PC-9 (cell line): ENCODE measurements at regions of chr6 and their contacts with region 1.

Region 1: GRCh38 chr6:71181565-71181964 is 107.0 kb upstream of the OGFRL1 start:
- DNase-seq: peak; percentile 69 to 77
- H3K4me3 ChIP-seq: no peak overlapping the region
- H3K27ac ChIP-seq: peak overlapping the region; percentile 51
- H3K4me1 ChIP-seq: peaks cover 16% of the 10 kb centered on the region
- H3K27me3 ChIP-seq: no peaks in the 10 kb centered on the region
- CTCF ChIP-seq: no peak

Region 2: DNA sequence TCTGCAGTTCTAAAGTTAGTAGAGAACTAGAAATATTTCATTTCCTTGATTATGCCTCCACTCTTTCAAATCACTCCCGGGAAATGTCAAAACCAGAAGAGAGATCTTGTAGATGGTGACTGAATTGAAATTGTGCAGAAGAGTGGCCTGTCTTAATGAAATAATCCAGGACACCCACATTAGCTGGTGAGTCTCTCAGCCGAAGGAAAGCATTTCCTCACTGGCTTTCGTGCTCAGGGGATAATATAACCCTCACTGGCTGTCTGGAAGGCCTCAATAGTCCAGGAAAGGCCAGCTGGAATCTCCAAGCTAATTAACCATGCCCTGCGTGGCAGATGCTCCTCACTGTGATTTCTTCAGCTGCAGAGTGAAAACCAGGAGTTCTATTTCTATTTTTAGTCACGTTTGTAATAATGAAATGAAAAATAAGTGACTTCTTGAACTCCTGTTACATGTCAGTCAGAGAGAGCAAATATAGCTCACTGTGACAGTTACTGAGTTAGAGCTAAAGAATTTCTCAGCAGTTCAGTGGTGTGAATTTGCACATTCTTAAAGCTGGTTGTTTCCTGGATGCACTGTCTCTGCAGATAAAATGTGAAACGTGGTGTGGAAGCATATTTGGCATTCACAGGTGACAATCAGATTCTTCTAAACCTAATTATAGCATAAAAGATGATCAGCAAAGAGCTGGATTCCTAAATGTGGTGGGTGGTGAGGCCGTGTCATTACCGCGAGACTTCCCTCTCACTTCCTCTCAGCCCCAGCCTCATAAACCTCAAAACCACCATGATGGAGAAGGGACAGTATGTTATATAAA is 1596.4 kb before region 1 on chr6:
- CTCF ChIA-PET with region 1: no interaction called
- POLR2A ChIA-PET with region 1: no interaction called
- intact Hi-C with region 1: no loop called
- DNase-seq: no peak
- H3K4me3 ChIP-seq: no peak overlapping the region
- H3K27ac ChIP-seq: no peak overlapping the region
- H3K4me1 ChIP-seq: no peaks in the 10 kb centered on the region
- H3K27me3 ChIP-seq: no peaks in the 10 kb centered on the region
- CTCF ChIP-seq: no peak

Region 3: GRCh38 chr6:71028236-71028876 is 153.2 kb before region 1 on chr6:
- CTCF ChIA-PET with region 1: no interaction called
- POLR2A ChIA-PET with region 1: interaction called, 3 read pairs
- intact Hi-C with region 1: loop called (anchors 10 kb)
- DNase-seq: no peak
- H3K4me3 ChIP-seq: no peak overlapping the region
- H3K27ac ChIP-seq: no peak overlapping the region
- H3K4me1 ChIP-seq: no peaks in the 10 kb centered on the region
- H3K27me3 ChIP-seq: no peaks in the 10 kb centered on the region
- CTCF ChIP-seq: no peak

Region 4: DNA sequence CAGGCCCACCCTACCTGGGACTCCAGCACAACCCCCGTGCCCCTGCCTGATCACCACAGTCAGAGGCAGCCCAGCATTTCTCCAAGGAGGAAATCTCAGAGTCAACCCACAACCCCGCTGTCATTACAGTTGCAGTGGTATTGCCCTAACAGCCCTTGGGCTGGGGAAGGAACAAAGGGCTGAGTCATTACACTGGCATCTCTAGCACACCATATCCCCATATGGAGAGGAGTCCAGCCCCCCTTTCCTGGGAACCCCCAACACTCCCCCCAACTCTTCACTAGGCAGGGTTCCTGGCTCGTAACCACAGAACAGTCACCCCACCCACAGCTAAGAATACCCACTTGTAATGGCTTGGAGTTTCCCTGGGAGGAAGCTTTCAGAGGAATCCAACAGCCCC is 42.3 kb before region 1 on chr6:
- CTCF ChIA-PET with region 1: no interaction called
- POLR2A ChIA-PET with region 1: no interaction called
- intact Hi-C with region 1: loop called (anchors 2 kb)
- DNase-seq: peak in 1 of 2 experiments; percentile 59
- H3K4me3 ChIP-seq: no peak overlapping the region
- H3K27ac ChIP-seq: no peak overlapping the region
- H3K4me1 ChIP-seq: no peaks in the 10 kb centered on the region
- H3K27me3 ChIP-seq: no peaks in the 10 kb centered on the region
- CTCF ChIP-seq: no peak

Region 5: GRCh38 chr6:71168233-71168765 is 13.3 kb before region 1 on chr6:
- CTCF ChIA-PET with region 1: no interaction called
- POLR2A ChIA-PET with region 1: interaction called, 10 read pairs
- intact Hi-C with region 1: no loop called
- DNase-seq: no peak
- H3K4me3 ChIP-seq: no peak overlapping the region
- H3K27ac ChIP-seq: no peak overlapping the region
- H3K4me1 ChIP-seq: no peaks in the 10 kb centered on the region
- H3K27me3 ChIP-seq: no peaks in the 10 kb centered on the region
- CTCF ChIP-seq: no peak

Region 6: GRCh38 chr6:71375676-71376075 is 194.1 kb after region 1 on chr6:
- CTCF ChIA-PET with region 1: no interaction called
- POLR2A ChIA-PET with region 1: no interaction called
- intact Hi-C with region 1: loop called (anchors 10 kb)
- DNase-seq: no peak
- H3K4me3 ChIP-seq: no peak overlapping the region
- H3K27ac ChIP-seq: no peak overlapping the region
- H3K4me1 ChIP-seq: no peaks in the 10 kb centered on the region
- H3K27me3 ChIP-seq: no peaks in the 10 kb centered on the region
- CTCF ChIP-seq: no peak

Region 7: GRCh38 chr6:71621918-71622519 is 440.5 kb after region 1 on chr6:
- CTCF ChIA-PET with region 1: no interaction called
- POLR2A ChIA-PET with region 1: no interaction called
- intact Hi-C with region 1: no loop called
- DNase-seq: no peak
- H3K4me3 ChIP-seq: no peak overlapping the region
- H3K27ac ChIP-seq: no peak overlapping the region
- H3K4me1 ChIP-seq: no peaks in the 10 kb centered on the region
- H3K27me3 ChIP-seq: no peaks in the 10 kb centered on the region
- CTCF ChIP-seq: peak; percentile 64